ENCODE measurements at regions of chr9 and their contacts with region 1.

Region 1: DNA sequence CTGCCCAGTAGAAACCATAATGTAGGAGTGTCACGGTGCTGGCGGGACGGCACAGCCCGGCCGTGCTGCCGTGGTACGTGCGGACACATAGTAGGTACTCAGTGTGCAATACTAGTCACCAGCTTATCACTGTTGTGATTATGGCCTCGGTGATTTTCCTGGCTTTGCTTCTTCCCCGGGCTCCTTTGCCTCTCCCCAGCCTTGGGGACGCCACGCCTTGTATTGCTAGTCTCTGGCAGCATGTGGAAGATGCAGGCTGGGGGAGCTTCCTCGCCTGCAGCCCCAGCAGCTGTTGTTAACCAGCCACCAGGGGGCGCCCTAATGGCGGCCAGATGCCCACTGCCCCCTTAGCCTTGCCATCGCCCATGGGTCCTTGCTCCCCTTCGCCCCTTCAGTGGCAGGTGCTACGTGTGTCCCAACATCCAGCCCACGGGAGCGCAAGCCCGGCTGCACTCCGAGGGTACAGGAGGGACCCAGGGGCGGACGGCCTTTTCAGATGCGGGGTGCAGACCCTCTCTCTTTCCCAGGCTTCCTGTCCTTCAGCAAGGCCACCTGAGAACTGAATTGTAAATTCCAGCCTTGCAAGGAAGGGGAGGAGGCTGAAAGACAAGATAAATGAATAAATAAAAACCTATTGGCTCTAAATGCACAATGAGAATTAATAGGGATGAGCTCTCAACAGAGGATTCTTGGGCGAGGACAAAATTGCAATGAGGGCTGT is 8.0 kb downstream of the NTNG2 start:
- DNase-seq: peak; percentile 83
- ATAC-seq: peak; percentile 71
- H3K4me3 Mint-ChIP-seq: no peak overlapping the region
- H3K27ac Mint-ChIP-seq: no peak overlapping the region
- H3K4me1 Mint-ChIP-seq: peaks cover 16% of the 10 kb centered on the region
- H3K27me3 Mint-ChIP-seq: peaks cover 23% of the 10 kb centered on the region
- CTCF ChIP-seq: peak; percentile 97

Region 2: GRCh38 chr9:132154863-132155309 is 14.9 kb before region 1 on chr9:
- CTCF ChIA-PET with region 1: interaction called, 13 read pairs
- POLR2A ChIA-PET with region 1: no interaction called
- DNase-seq: peak; percentile 48
- ATAC-seq: peak; percentile 80
- H3K4me3 Mint-ChIP-seq: no peak overlapping the region
- H3K27ac Mint-ChIP-seq: peak overlapping the region; percentile 64
- H3K4me1 Mint-ChIP-seq: peaks cover 24% of the 10 kb centered on the region
- H3K27me3 Mint-ChIP-seq: peaks cover 13% of the 10 kb centered on the region
- CTCF ChIP-seq: no peak

Region 3: DNA sequence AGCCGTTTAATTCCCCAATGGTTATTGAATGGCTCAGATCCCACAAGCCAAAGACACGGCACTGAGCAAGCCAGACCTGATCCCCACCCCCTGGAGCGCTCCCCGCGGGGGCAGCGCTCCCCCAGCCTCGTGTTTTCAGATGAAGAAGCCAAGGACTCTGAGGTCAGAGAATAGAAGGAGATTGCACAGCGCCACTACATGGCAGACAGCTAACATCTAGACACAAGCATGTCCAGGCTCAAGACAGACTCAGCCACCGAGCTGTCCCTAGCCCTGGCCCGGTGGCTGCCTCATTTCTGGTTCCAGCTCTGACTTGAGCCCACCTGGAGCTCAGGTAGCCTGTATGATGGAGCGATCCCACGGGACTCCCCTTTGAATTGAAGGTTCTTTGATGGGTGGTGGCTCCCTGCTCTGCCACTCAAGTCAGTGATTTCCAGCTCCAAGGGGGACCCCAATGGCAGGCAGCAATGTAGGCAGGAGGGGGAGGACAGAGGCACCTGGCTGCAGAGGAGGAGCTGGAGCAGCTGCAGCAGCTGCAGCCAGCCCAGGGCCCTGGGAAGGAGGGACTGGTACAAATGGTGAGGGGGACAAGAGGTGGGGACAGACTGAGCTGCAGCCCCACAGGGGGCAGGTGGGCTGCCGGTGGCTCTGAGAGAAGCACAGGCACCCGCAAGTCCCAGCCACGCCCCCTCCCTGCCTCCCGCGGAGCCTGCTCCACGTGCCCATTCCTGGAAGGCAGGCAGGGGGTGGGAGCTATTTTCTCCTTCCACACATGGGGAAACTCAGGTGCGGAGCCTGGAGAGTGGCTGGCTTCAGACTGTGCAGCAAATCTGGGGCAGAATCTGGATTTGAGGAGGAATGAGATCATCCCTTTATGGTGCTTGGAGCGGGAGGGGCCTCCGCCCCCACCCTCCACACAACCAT is 32.2 kb after region 1 on chr9:
- CTCF ChIA-PET with region 1: interaction called, 11 read pairs
- POLR2A ChIA-PET with region 1: no interaction called
- DNase-seq: no peak
- ATAC-seq: peak; percentile 28
- H3K4me3 Mint-ChIP-seq: no peak overlapping the region
- H3K27ac Mint-ChIP-seq: no peak overlapping the region
- H3K4me1 Mint-ChIP-seq: peaks cover 4% of the 10 kb centered on the region; the same call in 1 of the 2 replicates
- H3K27me3 Mint-ChIP-seq: no peaks in the 10 kb centered on the region; the same call in 1 of the 2 replicates
- CTCF ChIP-seq: no peak

Region 4: DNA sequence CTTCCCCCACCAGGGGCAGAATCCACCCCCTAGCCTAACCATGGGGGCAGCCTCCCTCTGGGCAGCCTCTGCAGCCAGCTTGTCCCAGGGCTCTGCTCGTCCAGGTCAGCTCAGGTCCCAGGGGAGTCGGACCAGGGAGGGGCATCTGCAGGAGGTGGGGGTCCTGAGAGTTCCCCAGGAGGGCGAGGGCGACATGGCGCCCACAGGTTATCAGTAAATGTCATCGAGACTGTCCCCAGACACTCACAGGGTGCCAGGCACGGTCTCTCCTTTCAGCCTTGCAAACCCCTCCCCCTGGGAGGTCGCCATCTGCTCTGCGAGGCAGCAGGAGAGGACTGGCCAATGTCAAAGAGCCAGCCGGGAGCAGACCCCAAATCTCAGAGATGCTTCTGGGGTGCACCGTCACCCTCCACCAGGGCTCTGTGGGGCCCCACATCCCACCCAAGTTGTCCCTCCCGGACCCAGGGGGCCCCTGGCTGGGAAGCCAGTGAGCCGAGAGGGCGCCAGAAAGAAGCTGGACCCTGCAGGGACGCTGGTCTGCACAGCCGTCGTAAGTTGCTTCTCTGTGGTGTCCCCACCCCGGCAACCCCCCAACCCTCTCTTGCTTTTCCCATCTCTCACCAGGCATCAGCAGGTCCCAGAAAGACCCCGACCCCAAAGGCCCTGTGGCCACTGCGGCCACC is 61.3 kb after region 1 on chr9:
- CTCF ChIA-PET with region 1: interaction called, 343 read pairs
- POLR2A ChIA-PET with region 1: interaction called, 3 read pairs
- DNase-seq: no peak
- ATAC-seq: no peak
- H3K4me3 Mint-ChIP-seq: no peak overlapping the region
- H3K27ac Mint-ChIP-seq: no peak overlapping the region
- H3K4me1 Mint-ChIP-seq: peaks cover 3% of the 10 kb centered on the region; the same call in 1 of the 2 replicates
- H3K27me3 Mint-ChIP-seq: no peaks in the 10 kb centered on the region
- CTCF ChIP-seq: no peak

Region 5: GRCh38 chr9:132260846-132261245 is 91.0 kb after region 1 on chr9:
- CTCF ChIA-PET with region 1: interaction called, 25 read pairs
- POLR2A ChIA-PET with region 1: no interaction called
- DNase-seq: no peak
- ATAC-seq: no peak
- H3K4me3 Mint-ChIP-seq: no peak overlapping the region
- H3K27ac Mint-ChIP-seq: no peak overlapping the region
- H3K4me1 Mint-ChIP-seq: no peaks in the 10 kb centered on the region
- H3K27me3 Mint-ChIP-seq: no peaks in the 10 kb centered on the region
- CTCF ChIP-seq: no peak

Measured in WTC11 (cell line).